Tibial artery (tissue), 4 donors: ENCODE measurements at regions of chr1 and their contacts with region 1.

Region 1: DNA sequence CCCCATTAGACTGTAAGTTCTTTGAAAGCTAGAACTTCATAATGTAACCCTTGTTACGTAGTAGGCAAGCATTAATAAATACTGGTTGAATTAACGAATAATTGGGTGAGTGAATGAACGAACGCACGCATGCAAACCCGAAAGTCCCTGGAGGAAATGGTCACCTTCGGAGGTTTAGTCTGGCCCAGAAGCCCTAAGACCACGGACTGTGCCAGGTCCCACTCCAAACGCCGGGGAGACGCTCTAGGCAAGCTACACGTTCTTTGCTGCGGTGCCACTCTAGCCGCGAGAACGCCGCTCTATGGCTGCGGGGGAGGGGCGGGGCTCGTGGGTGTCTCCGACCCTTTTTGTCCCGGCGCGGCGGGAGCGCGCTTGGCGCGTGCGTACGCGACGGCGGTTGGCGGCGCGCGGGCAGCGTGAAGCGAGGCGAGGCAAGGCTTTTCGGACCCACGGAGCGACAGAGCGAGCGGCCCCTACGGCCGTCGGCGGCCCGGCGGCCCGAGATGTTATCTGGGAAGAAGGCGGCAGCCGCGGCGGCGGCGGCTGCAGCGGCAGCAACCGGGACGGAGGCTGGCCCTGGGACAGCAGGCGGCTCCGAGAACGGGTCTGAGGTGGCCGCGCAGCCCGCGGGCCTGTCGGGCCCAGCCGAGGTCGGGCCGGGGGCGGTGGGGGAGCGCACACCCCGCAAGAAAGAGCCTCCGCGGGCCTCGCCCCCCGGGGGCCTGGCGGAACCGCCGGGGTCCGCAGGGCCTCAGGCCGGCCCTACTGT is at the start of gene KDM1A:
- DNase-seq: peak; percentile 97 to 98
- H3K4me3 ChIP-seq: peak within 1 kb of the TSS; percentile 78 to 98
- H3K27ac ChIP-seq: peak within 1 kb of the TSS; percentile 83 to 87
- H3K4me1 ChIP-seq: peaks cover 0 to 16% (median 8%) of the 10 kb centered on the region in 4 donors
- H3K27me3 ChIP-seq: no peaks in the 10 kb centered on the region
- CTCF ChIP-seq: no peak

Region 2: GRCh38 chr1:23035823-23036452 is 16.7 kb after region 1 on chr1:
- intact Hi-C with region 1: no loop called
- DNase-seq: no peak
- H3K4me3 ChIP-seq: no peak overlapping the region
- H3K27ac ChIP-seq: no peak overlapping the region
- H3K4me1 ChIP-seq: peaks cover 0 to 13% (median 5%) of the 10 kb centered on the region in 4 donors
- H3K27me3 ChIP-seq: no peaks in the 10 kb centered on the region
- CTCF ChIP-seq: no peak

Region 3: GRCh38 chr1:23074012-23074411 is 54.7 kb after region 1 on chr1:
- intact Hi-C with region 1: no loop called
- DNase-seq: no peak
- H3K4me3 ChIP-seq: no peak overlapping the region
- H3K27ac ChIP-seq: no peak overlapping the region
- H3K4me1 ChIP-seq: peaks cover 0 to 9% (median 0%) of the 10 kb centered on the region in 4 donors
- H3K27me3 ChIP-seq: no peaks in the 10 kb centered on the region
- CTCF ChIP-seq: no peak

Region 4: DNA sequence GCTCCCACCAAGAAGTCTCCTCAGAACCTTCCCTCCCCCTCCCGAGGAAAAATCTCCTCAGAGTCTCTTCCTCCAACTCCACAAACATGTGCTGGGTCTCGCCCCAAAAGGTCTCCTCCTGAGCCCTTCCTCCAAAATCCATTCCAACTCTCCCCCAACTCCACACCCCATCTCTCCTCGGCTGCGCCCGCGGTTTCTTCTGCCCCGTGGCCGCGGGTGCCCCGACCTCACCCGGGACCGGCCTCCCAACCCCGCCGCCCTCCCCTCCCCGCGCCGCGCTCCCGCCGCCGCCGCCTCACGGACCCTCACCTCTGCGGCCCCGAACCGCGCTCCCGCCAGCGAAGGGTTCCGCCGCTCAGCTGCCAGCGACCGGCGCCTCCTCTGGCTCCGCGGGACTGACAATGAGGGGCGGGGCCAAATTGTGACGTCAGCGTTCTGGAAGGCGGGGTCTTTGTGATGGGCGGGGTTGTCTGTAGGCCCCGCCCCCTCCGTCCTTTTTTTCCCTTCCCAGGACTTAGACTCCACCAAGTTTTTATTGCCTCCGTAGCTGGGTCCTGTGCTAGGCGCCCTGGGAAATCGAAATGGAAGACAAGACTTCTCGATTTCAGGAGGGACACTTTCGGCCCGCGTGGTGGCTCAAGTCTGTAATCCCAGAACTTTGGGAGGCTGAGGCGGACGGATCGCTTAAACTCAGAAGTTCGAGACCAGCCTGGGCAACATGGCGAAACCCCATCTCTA is 149.3 kb after region 1 on chr1 and contains the start of gene LUZP1:
- intact Hi-C with region 1: loop called (anchors 5 kb)
- DNase-seq: peak; percentile 87 to 93
- H3K4me3 ChIP-seq: peak within 1 kb of the TSS; percentile 90 to 94
- H3K27ac ChIP-seq: peak within 1 kb of the TSS; percentile 90 to 91
- H3K4me1 ChIP-seq: peaks cover 0 to 37% (median 22%) of the 10 kb centered on the region in 4 donors
- H3K27me3 ChIP-seq: no peaks in the 10 kb centered on the region
- CTCF ChIP-seq: no peak